PC-9 (cell line): ENCODE measurements at regions of chr3 and their contacts with region 1.

Region 1: GRCh38 chr3:122030381-122031122 is 8.5 kb upstream of the ILDR1 start:
- DNase-seq: no peak
- H3K4me3 ChIP-seq: no peak overlapping the region
- H3K27ac ChIP-seq: no peak overlapping the region
- H3K4me1 ChIP-seq: no peaks in the 10 kb centered on the region
- H3K27me3 ChIP-seq: no peaks in the 10 kb centered on the region
- CTCF ChIP-seq: no peak

Region 2: DNA sequence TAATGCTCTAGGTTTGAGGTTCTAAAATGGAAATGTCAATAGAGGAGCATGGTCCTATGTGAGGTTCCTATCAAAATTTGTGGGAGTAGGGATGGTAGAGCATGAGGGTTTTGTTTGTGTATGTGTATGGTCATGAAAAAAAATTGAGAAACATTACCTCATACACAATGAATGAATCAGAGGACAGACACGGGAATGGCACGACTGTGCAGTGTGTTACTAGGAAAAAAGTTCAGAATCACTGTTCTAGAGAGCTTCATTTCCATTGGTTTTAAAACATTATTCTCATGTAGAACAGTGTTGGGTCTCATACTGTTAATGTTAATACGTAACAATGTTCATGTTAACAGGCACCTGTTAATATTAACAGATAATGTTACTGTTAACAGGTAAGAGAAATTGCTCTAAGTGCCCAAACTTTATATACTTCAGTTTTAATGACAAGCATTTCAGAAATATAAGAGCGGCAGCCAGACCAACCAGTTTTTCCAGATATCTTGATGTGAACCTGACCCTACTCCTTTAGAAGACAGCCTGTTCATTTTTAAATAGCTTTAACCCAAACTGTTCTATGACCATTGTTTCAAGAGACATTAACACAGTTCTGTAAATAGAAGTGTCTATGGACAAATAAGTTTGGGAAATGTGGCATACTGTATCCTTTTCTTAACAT is 88.3 kb before region 1 on chr3:
- CTCF ChIA-PET with region 1: no interaction called
- POLR2A ChIA-PET with region 1: interaction called, 13 read pairs
- intact Hi-C with region 1: no loop called
- DNase-seq: peak; percentile 37 to 81
- H3K4me3 ChIP-seq: peak overlapping the region; percentile 30; the same call in 1 of the 2 replicates
- H3K27ac ChIP-seq: peak overlapping the region; percentile 71
- H3K4me1 ChIP-seq: peaks cover 39% of the 10 kb centered on the region
- H3K27me3 ChIP-seq: no peaks in the 10 kb centered on the region
- CTCF ChIP-seq: no peak